ENCODE measurements at regions of chr6 and their contacts with region 1.

Region 1: DNA sequence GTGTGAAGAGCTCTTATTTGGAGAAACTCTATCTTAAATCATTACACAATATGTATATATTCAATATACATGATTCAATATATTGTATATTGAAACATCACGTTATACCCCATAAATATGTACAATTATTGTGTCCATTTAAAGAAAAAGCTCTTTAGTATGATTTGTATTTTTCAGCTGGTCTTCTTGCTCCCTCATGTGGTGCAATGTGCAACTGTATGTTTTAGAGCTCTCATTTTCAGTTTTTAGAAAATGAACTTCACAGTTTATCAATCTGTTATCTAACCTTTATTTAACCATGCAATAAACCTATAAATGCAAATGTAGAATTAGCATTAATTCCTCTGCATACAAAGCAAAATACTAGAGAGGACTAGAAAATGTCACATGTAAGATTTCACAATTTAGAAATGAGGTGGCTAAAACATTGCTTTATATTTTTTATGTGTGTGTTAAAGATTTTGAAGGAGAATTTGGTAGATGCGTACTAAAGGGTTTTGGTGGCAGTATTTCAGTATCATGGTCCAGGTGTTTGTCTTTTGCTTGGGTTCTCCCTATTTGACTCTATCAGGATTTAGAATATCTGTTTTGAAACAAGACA is 167.1 kb downstream of the PHF3 start:
- DNase-seq: no peak
- ATAC-seq: 0 out of 2 replicates have a peak, but pooled peaks have one; percentile 25
- H3K4me3 ChIP-seq: no peak overlapping the region
- H3K27ac ChIP-seq: no peak overlapping the region
- H3K4me1 ChIP-seq: peaks cover 0 to 27% of the 10 kb centered on the region in 2 experiments; a peak in 2 of 4 replicates
- H3K27me3 ChIP-seq: no peaks in the 10 kb centered on the region
- CTCF ChIP-seq: peak; percentile 59 to 69 (median 61)
- POLR2A ChIP-seq: no peak
- RAD21 ChIP-seq: peak; percentile 79

Region 2: GRCh38 chr6:63307581-63308246 is 495.0 kb before region 1 on chr6:
- CTCF ChIA-PET with region 1: interaction called, 8 read pairs
- POLR2A ChIA-PET with region 1: no interaction called
- RAD21 ChIA-PET with region 1: no interaction called
- intact Hi-C with region 1: loop called (anchors 2 kb)
- DNase-seq: peak; percentile 47
- ATAC-seq: peak; percentile 98
- H3K4me3 ChIP-seq: no peak overlapping the region
- H3K27ac ChIP-seq: no peak overlapping the region
- H3K4me1 ChIP-seq: no peaks in the 10 kb centered on the region
- H3K27me3 ChIP-seq: no peaks in the 10 kb centered on the region
- CTCF ChIP-seq: peak; percentile 29 to 66 (median 56); a peak in 5 of 6 replicates
- POLR2A ChIP-seq: no peak
- RAD21 ChIP-seq: peak; percentile 68

Region 3: DNA sequence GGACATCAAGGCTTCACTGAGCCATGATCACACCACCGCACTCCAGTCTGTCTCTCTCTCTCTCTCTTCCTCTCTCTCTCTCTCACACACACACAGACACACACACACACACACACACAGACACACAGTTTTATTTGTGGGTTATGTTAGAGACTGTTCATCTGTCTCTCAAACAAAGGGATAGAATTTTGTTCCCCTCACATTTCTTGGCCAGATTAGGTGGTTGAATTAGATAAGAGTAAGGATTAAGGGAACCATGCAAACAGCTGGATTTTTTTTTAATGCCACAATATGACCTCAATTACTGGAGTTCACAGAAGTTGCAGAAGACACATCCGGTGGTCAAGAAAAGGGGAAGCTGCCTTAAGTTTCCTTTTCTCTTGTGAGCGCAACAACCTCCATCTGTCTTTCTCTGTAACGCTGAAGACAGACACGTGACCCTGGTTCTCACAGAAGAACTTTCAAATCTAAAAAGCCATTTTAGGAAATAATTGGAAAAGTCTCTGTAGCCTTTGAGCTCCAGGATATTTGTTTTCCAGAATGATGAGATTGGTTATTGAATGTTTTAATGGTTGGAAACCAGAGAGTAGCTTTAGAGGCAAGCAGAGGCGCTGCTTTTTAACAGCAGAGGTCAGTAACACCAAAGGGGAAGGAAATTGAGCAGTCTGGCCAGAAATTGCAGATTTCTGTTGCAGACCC is 450.0 kb before region 1 on chr6:
- CTCF ChIA-PET with region 1: interaction called, 138 read pairs
- POLR2A ChIA-PET with region 1: interaction called, 7 read pairs
- RAD21 ChIA-PET with region 1: interaction called, 10 to 20 read pairs
- intact Hi-C with region 1: loop called (anchors 1 kb)
- DNase-seq: peak; percentile 36
- ATAC-seq: peak; percentile 75
- H3K4me3 ChIP-seq: no peak overlapping the region
- H3K27ac ChIP-seq: no peak overlapping the region
- H3K4me1 ChIP-seq: peaks cover 0 to 31% of the 10 kb centered on the region in 2 experiments; a peak in 2 of 4 replicates
- H3K27me3 ChIP-seq: no peaks in the 10 kb centered on the region
- CTCF ChIP-seq: peak; percentile 59 to 82 (median 73)
- POLR2A ChIP-seq: no peak
- RAD21 ChIP-seq: peak; percentile 94

Region 4: DNA sequence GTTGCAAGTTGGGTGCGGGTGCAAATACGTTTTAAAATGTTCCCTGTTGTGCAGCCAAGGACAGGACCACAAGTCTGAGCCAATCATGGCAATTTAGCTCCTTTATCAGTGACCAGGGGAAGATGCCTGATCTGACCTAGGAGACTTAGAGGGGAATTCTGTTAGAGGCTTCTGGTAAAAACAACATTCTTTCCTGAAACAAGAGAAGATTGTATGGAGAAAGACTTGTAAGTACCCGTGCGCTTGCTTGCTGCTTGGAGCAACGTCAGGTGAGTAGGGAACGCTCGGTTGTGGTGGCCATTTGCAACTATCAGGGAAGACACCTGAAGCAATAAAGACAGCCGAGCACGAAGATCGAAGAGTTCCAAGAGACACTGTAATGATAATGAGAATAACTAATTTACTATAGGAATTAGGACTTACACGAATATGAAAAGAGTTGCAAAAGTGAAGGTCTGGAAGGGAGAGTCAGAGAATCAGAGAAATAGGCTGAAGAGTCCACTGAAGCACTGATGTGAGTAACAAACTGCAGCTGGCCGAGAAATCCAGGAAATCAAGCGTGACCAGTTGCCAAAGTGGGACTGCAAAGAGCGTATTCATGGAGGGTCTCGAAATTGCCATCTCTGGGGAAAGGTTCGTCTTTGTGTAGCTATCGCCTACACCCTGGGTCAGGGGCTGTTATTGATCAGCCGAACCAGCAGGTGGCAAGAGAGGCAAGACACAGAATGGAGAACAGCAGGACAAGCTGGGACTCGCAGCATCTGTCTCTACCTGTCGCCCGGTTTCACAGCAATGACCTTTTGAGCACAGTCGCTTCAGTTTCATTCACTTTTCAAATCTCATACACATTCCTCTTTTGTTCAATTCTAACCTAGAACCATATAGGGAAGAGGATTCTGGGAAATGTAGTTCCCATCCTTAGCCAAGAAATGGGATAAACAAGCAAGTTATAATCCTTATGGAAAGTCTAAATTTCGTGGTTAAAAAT is 204.4 kb before region 1 on chr6:
- CTCF ChIA-PET with region 1: interaction called, 14 read pairs
- POLR2A ChIA-PET with region 1: no interaction called
- RAD21 ChIA-PET with region 1: no interaction called
- intact Hi-C with region 1: loop called (anchors 5 kb)
- DNase-seq: peak; percentile 51
- ATAC-seq: peak; percentile 99
- H3K4me3 ChIP-seq: no peak overlapping the region
- H3K27ac ChIP-seq: no peak overlapping the region
- H3K4me1 ChIP-seq: peaks cover 0 to 4% of the 10 kb centered on the region in 2 experiments; a peak in 1 of 4 replicates
- H3K27me3 ChIP-seq: no peaks in the 10 kb centered on the region
- CTCF ChIP-seq: peak; percentile 35 to 80 (median 78); a peak in 5 of 6 replicates
- POLR2A ChIP-seq: no peak
- RAD21 ChIP-seq: peak; percentile 63

Region 5: DNA sequence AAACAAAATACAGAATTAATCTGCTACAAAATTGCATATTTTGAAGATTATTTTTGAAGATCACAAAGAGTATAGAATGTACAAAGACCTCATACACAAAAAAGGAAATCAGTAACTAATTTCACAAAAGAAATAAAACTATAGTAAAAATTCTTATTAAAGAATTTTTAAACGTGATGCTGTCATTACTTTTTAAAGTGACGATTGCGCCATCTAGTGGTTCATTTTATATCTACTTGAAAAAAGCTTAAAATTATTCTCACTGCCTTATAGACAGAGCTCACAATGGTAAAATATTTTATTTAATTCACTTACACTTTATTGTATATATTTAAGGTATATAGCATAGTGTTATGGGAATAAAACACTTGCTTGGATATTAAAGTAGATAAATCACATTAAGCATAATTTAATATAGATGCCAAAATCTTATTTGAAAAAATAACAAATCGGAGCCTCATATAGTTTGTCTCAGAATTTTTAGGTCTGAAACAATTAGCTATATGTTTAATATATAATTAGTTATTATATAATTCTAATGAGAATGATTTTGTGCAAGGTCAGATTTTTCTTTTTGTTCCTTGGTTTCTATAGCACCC is 38.3 kb before region 1 on chr6:
- CTCF ChIA-PET with region 1: interaction called, 24 read pairs
- POLR2A ChIA-PET with region 1: no interaction called
- RAD21 ChIA-PET with region 1: interaction called in 1 of 2 experiments, 3 read pairs
- intact Hi-C with region 1: no loop called
- DNase-seq: peak; percentile 29
- ATAC-seq: peak; percentile 53; the same call in 1 of the 2 replicates
- H3K4me3 ChIP-seq: no peak overlapping the region
- H3K27ac ChIP-seq: no peak overlapping the region
- H3K4me1 ChIP-seq: no peaks in the 10 kb centered on the region
- H3K27me3 ChIP-seq: no peaks in the 10 kb centered on the region
- CTCF ChIP-seq: peak; percentile 15 to 51 (median 44); a peak in 2 of 6 replicates
- POLR2A ChIP-seq: no peak
- RAD21 ChIP-seq: peak; percentile 61

Region 6: GRCh38 chr6:63813566-63814120 is 10.9 kb after region 1 on chr6:
- CTCF ChIA-PET with region 1: interaction called, 11 read pairs
- POLR2A ChIA-PET with region 1: interaction called, 7 read pairs
- RAD21 ChIA-PET with region 1: no interaction called
- intact Hi-C with region 1: no loop called
- DNase-seq: no peak
- ATAC-seq: peak; percentile 42; the same call in 1 of the 2 replicates
- H3K4me3 ChIP-seq: no peak overlapping the region
- H3K27ac ChIP-seq: no peak overlapping the region
- H3K4me1 ChIP-seq: no peaks in the 10 kb centered on the region
- H3K27me3 ChIP-seq: no peaks in the 10 kb centered on the region
- CTCF ChIP-seq: peak in 2 of 3 experiments; percentile 9 to 14; a peak in 1 of 6 replicates
- POLR2A ChIP-seq: no peak
- RAD21 ChIP-seq: 0 out of 2 replicates have a peak, but pooled peaks have one; percentile 4

Measured in HCT116 (cell line).